ENCODE measurements at regions of chr10 and their contacts with region 1.

Region 1: DNA sequence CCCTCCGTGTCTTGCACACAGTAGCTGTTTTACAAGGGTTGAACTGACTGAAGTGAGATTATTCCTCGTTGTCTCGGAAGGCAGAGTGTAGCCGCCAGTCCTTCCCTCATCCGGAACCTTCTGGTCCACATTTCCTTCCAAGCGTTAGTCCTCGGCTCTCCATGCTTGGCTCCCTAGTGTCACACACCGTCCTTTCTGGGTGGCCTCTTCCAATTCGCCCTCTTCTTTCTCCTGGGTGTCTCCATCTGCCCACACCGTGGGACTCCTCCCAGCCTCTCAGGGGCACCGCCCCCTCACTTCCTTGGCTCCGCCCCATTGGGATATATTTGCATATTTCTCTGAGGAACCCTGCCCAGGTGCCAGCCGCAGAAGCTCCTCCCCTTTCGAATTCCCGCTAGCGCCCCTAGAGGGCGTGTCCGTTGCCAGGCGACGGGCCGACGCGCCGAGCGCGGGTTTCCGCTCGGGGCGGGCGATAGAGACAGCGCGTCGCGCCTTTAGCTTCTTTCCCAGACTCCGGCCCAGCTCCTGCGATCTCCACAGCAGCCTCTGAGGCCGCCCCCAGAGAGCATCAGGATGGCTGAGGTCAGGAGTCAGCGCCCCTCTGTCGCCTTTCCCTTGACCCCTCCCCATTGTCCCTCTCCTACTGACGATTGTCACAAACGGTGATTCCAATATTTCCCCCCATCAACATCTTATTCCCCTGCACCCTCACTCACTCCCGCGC is at the start of gene CFAP58:
- DNase-seq: peak; percentile 82 to 90 (median 87)
- ATAC-seq: peak; percentile 88
- H3K4me3 ChIP-seq: peak within 1 kb of the TSS; percentile 54
- H3K4me3 Mint-ChIP-seq: peak within 1 kb of the TSS in 6 of 10 donors; percentile 4 to 67 (median 10)
- H3K27ac ChIP-seq: no peak within 1 kb of the TSS
- H3K27ac Mint-ChIP-seq: peak within 1 kb of the TSS in 2 of 9 donors; percentile 14 to 61
- H3K4me1 ChIP-seq: peaks cover 11% of the 10 kb centered on the region in 2 donors
- H3K4me1 Mint-ChIP-seq: peaks cover 0 to 20% (median 6%) of the 10 kb centered on the region in 7 donors
- H3K27me3 ChIP-seq: no peaks in the 10 kb centered on the region
- H3K27me3 Mint-ChIP-seq: no peaks in the 10 kb centered on the region
- total RNA-seq, gene CFAP58: 0.17 TPM in 1 of 5 experiments, not detected in the others

Region 2: DNA sequence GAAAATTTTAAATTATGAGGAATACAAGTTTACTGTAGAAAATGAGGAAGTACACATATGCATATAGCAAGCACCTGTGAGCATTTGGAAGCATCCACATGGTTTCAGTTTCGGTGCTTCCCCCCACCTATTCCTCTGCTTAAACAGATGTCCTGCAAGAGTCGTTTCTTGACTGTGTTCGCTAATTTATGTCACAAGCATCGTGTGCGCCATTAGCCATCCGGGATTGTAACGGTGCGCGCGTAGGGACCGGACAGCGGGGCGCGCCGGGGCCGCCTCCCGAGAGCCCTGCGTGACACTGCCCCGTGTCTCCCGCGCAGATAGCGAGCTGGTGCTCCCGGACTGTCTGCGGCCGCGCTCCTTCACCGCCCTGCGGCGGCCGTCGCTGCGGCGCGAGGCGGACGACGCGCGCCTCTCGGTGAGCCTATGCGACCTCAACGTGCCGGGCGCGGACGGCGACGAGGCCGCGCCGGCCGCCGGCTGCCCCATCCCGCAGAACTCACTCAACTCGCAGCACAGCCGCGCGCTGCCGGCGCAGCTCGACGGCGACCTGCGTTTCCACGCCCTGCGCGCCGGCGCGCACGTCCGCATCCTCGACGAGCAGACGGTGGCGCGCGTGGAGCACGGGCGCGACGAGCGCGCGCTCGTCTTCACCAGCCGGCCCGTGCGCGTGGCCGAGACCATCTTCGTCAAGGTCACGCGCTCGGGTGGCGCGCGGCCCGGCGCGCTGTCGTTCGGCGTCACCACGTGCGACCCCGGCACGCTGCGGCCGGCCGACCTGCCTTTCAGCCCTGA is 769.1 kb before region 1 on chr10:
- CTCF ChIA-PET with region 1: no interaction called
- POLR2A ChIA-PET with region 1: no interaction called
- intact Hi-C with region 1: no loop called
- DNase-seq: peak; percentile 46 to 69 (median 58)
- ATAC-seq: peak; percentile 86
- H3K4me3 ChIP-seq: peak overlapping the region; percentile 91
- H3K4me3 Mint-ChIP-seq: peak overlapping the region; percentile 84 to 98 (median 90)
- H3K27ac ChIP-seq: peak overlapping the region; percentile 65
- H3K27ac Mint-ChIP-seq: peak overlapping the region; percentile 84 to 98 (median 96)
- H3K4me1 ChIP-seq: peaks cover 6 to 10% of the 10 kb centered on the region in 2 donors
- H3K4me1 Mint-ChIP-seq: peaks cover 4 to 27% (median 18%) of the 10 kb centered on the region in 7 donors
- H3K27me3 ChIP-seq: no peaks in the 10 kb centered on the region
- H3K27me3 Mint-ChIP-seq: peaks cover 0 to 10% (median 0%) of the 10 kb centered on the region in 5 donors

Region 3: GRCh38 chr10:103918053-103918846 is 435.2 kb before region 1 on chr10 and contains the start of gene STN1:
- CTCF ChIA-PET with region 1: no interaction called
- POLR2A ChIA-PET with region 1: no interaction called
- intact Hi-C with region 1: loop called in 1 of 2 experiments (anchors 5 kb)
- DNase-seq: peak; percentile 81 to 95 (median 94)
- ATAC-seq: peak; percentile 97
- H3K4me3 ChIP-seq: peak within 1 kb of the TSS; percentile 89
- H3K4me3 Mint-ChIP-seq: peak within 1 kb of the TSS; percentile 88 to 99 (median 97)
- H3K27ac ChIP-seq: peak within 1 kb of the TSS; percentile 79
- H3K27ac Mint-ChIP-seq: peak within 1 kb of the TSS; percentile 95 to 99 (median 97)
- H3K4me1 ChIP-seq: peaks cover 28 to 31% of the 10 kb centered on the region in 2 donors
- H3K4me1 Mint-ChIP-seq: peaks cover 15 to 44% (median 38%) of the 10 kb centered on the region in 7 donors
- H3K27me3 ChIP-seq: no peaks in the 10 kb centered on the region
- H3K27me3 Mint-ChIP-seq: no peaks in the 10 kb centered on the region
- total RNA-seq, gene STN1: 28.8 to 42.6 (median 34.8) TPM

Region 4: DNA sequence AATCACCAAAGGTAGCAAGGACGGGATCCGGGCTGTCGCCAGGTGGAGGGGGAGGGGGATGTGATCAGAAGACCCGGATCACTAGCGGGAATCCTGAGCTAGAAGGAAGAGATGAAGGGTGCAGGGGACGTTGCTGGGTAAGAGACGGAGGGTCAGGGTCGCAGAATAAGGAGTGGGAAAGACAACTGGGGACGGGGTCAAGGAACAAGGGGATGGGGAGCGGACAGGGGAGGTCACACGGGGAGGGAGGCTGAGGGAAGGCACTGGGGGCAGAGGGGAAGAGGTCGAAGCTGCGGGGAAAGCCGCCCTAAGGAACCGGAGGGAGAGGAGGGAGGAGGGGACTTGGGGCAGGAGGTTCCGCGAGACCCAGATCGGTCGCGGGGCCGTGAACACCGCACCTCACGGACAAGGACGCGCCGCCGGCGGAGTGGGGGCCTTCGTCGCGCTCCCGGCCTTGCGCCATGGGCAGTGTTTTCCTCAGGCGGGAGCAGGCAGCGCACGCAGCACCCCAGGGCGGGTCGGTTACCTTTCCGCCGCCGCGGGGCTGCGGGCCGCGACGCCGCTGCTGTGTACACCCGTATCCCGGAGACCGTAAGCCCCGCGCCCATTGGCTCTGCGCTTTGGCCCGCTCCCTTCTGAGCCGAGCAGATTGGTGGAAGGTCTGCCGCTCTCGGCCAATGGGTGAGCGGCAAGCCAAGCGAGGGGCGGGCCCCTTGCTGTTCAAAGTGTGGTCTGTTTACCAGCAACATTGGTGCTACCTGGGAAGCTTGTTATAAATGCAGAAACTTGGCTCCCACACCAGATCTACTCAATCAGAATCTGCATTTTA is 121.5 kb before region 1 on chr10 and contains the start of gene CFAP43:
- CTCF ChIA-PET with region 1: no interaction called
- POLR2A ChIA-PET with region 1: no interaction called
- intact Hi-C with region 1: loop called (anchors 1 kb)
- DNase-seq: peak; percentile 99 to 100 (median 99)
- ATAC-seq: peak; percentile 100
- H3K4me3 ChIP-seq: peak within 1 kb of the TSS; percentile 74
- H3K4me3 Mint-ChIP-seq: peak within 1 kb of the TSS; percentile 84 to 95 (median 91)
- H3K27ac ChIP-seq: peak within 1 kb of the TSS; percentile 44
- H3K27ac Mint-ChIP-seq: peak within 1 kb of the TSS; percentile 63 to 95 (median 86)
- H3K4me1 ChIP-seq: peaks cover 0 to 6% of the 10 kb centered on the region in 2 donors
- H3K4me1 Mint-ChIP-seq: peaks cover 6 to 18% (median 13%) of the 10 kb centered on the region in 7 donors
- H3K27me3 ChIP-seq: peaks cover 0 to 7% of the 10 kb centered on the region in 2 donors
- H3K27me3 Mint-ChIP-seq: peaks cover 10 to 58% (median 19%) of the 10 kb centered on the region in 5 donors
- total RNA-seq, gene CFAP43: 0.17 TPM in 1 of 5 experiments, not detected in the others

Region 5: DNA sequence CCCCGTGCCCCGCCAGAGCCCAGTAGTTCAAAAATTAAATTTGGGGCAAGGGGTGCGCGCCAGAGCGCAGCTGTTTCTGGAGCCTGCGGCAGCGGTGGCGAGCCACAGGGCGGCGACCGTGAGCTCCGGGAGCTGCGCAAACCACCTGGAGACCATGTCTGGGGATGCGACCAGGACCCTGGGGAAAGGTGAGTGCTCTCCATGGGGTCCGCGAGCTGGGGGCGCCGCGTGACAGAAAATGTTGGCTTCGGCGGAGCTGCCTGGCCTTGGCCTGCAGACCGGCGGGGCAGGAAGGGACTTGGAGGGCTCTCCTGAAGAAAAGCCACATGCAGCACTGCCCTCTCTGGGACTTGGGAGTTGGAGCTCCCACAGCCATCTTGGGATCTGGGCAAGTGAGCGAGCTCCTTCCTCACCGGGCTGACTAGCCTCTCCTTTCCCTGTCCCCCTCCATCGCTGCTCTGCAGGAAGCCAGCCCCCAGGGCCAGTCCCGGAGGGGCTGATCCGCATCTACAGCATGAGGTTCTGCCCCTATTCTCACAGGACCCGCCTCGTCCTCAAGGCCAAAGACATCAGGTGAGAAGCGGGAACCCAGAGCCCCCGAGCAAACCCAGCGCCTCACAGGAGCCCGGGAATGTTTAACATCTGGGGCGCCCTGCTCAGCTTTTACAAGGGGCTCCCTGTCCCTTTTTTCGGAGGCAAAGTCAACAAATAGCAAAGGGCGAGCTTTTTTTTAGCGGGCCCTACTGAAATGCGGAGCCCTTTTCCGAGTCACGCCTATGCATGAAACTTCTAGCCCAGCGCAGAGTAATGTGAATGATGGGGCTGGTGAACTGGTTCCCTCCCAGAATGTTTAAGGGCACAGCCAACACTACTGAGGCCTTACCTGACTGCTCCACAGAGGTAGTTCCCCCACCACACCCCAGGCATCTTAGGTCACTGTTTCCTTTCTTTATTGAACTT is 78.4 kb before region 1 on chr10:
- CTCF ChIA-PET with region 1: interaction called, 39 read pairs
- POLR2A ChIA-PET with region 1: interaction called, 8 read pairs
- intact Hi-C with region 1: loop called in 1 of 2 experiments (anchors 1 kb)
- DNase-seq: peak in 6 of 9 donors; percentile 35 to 60 (median 44)
- ATAC-seq: peak; percentile 90
- H3K4me3 ChIP-seq: peak overlapping the region; percentile 44
- H3K4me3 Mint-ChIP-seq: peak overlapping the region in 8 of 10 donors; percentile 18 to 70 (median 40)
- H3K27ac ChIP-seq: no peak overlapping the region
- H3K27ac Mint-ChIP-seq: no peak overlapping the region
- H3K4me1 ChIP-seq: peaks cover 3 to 7% of the 10 kb centered on the region in 2 donors
- H3K4me1 Mint-ChIP-seq: peaks cover 0 to 5% (median 0%) of the 10 kb centered on the region in 7 donors
- H3K27me3 ChIP-seq: no peaks in the 10 kb centered on the region
- H3K27me3 Mint-ChIP-seq: peaks cover 0 to 22% (median 4%) of the 10 kb centered on the region in 5 donors

Region 6: DNA sequence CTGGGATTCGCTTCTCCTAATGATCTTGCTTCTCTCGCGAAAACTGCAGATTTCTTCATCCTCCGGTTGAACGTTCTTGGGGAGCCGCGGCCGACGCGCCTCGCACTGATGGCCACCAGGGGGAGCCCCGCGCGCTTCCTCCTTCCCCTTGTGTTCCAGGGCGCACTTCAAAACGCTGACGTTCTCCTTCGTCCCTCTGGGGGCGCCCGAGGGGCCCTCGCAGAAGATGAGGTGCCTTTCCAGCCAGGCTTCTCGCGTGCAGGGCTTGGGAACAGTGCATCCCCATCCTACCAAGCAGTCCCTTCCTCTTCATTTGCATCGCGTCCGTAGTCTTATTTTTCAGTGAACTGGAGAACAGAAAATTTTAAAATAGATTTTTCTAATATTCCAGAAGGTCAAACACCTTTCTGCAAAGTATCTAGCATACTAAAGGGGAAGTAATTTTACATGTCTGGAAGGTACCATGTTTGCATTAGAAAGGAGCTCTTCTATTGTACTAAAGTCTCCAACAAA is 62.0 kb before region 1 on chr10:
- CTCF ChIA-PET with region 1: interaction called, 220 read pairs
- POLR2A ChIA-PET with region 1: interaction called, 3 read pairs
- intact Hi-C with region 1: loop called (anchors 1 kb)
- DNase-seq: peak; percentile 77 to 89 (median 86)
- ATAC-seq: peak; percentile 100
- H3K4me3 ChIP-seq: no peak overlapping the region
- H3K4me3 Mint-ChIP-seq: peak overlapping the region in 4 of 10 donors; percentile 0 to 64 (median 26)
- H3K27ac ChIP-seq: no peak overlapping the region
- H3K27ac Mint-ChIP-seq: peak overlapping the region in 5 of 9 donors; percentile 1 to 81 (median 20)
- H3K4me1 ChIP-seq: peaks cover 0 to 9% of the 10 kb centered on the region in 2 donors
- H3K4me1 Mint-ChIP-seq: peaks cover 2 to 11% (median 6%) of the 10 kb centered on the region in 7 donors
- H3K27me3 ChIP-seq: peaks cover 0 to 5% of the 10 kb centered on the region in 2 donors
- H3K27me3 Mint-ChIP-seq: peaks cover 3 to 45% (median 10%) of the 10 kb centered on the region in 5 donors

Region 7: DNA sequence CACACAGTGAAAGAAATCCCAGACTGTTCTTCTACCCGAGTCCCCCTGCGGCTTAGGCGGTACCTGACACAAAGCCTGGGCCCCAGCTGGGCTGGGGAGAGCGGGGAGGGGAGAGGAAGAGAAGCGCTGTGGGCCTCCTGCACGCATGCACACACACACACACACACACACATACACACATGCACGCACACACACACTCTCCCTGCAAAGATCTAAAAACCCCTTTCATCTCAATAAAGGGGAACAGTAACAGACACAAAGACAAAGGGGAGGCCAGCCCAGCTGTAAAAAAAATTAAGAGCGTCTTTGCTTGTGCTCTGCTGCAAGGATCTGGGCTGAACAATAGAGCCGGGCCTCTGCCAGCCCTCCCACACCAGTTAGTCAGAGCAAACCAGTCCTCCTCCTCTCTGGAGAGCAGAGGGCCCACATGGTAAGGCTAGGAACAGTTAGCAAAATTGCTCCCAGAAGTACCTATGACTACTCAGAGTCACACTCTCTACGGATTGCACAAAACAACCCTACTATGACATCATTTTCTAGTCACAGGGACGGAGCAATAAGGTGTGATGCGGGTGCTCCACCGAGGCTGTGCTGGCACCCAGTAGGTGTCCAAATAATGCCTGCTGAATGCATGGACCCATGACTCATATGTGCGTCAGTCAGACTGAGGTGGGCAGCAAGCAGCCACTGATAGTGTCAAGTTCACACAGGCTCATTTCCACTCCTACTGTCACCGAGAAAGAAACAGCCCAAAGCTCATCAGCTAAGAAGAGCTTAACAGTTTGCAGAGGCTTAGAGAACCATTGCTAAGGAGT is 24.4 kb before region 1 on chr10:
- CTCF ChIA-PET with region 1: interaction called, 10 read pairs
- POLR2A ChIA-PET with region 1: interaction called, 3 read pairs
- intact Hi-C with region 1: loop called (anchors 1 kb)
- DNase-seq: peak in 8 of 9 donors; percentile 71 to 95 (median 80)
- ATAC-seq: peak; percentile 64
- H3K4me3 ChIP-seq: peak overlapping the region; percentile 51
- H3K4me3 Mint-ChIP-seq: peak overlapping the region; percentile 76 to 93 (median 86)
- H3K27ac ChIP-seq: peak overlapping the region; percentile 78
- H3K27ac Mint-ChIP-seq: peak overlapping the region; percentile 87 to 97 (median 94)
- H3K4me1 ChIP-seq: peaks cover 64 to 97% of the 10 kb centered on the region in 2 donors
- H3K4me1 Mint-ChIP-seq: peaks cover 80 to 100% (median 99%) of the 10 kb centered on the region in 7 donors
- H3K27me3 ChIP-seq: no peaks in the 10 kb centered on the region
- H3K27me3 Mint-ChIP-seq: no peaks in the 10 kb centered on the region

Region 8: GRCh38 chr10:104337974-104338735 is 15.3 kb before region 1 on chr10 and contains the start of gene ITPRIP:
- CTCF ChIA-PET with region 1: interaction called, 24 read pairs
- POLR2A ChIA-PET with region 1: interaction called, 19 read pairs
- intact Hi-C with region 1: loop called (anchors 1 kb)
- DNase-seq: peak; percentile 60 to 89 (median 88)
- ATAC-seq: peak; percentile 86
- H3K4me3 ChIP-seq: peak within 1 kb of the TSS; percentile 85
- H3K4me3 Mint-ChIP-seq: peak within 1 kb of the TSS; percentile 88 to 100 (median 98)
- H3K27ac ChIP-seq: peak within 1 kb of the TSS; percentile 94
- H3K27ac Mint-ChIP-seq: peak within 1 kb of the TSS; percentile 87 to 100 (median 99)
- H3K4me1 ChIP-seq: peaks cover 22 to 34% of the 10 kb centered on the region in 2 donors
- H3K4me1 Mint-ChIP-seq: peaks cover 34 to 58% (median 49%) of the 10 kb centered on the region in 7 donors
- H3K27me3 ChIP-seq: no peaks in the 10 kb centered on the region
- H3K27me3 Mint-ChIP-seq: peaks cover 0 to 10% (median 0%) of the 10 kb centered on the region in 5 donors
- total RNA-seq, gene ITPRIP: 20.0 to 129 (median 27.8) TPM

Region 9: GRCh38 chr10:104688251-104688650 is 334.8 kb after region 1 on chr10:
- CTCF ChIA-PET with region 1: no interaction called
- POLR2A ChIA-PET with region 1: no interaction called
- intact Hi-C with region 1: no loop called
- DNase-seq: no peak
- ATAC-seq: no peak
- H3K4me3 ChIP-seq: no peak overlapping the region
- H3K4me3 Mint-ChIP-seq: no peak overlapping the region
- H3K27ac ChIP-seq: no peak overlapping the region
- H3K27ac Mint-ChIP-seq: no peak overlapping the region
- H3K4me1 ChIP-seq: no peaks in the 10 kb centered on the region
- H3K4me1 Mint-ChIP-seq: no peaks in the 10 kb centered on the region
- H3K27me3 ChIP-seq: no peaks in the 10 kb centered on the region
- H3K27me3 Mint-ChIP-seq: peaks cover 4 to 64% (median 44%) of the 10 kb centered on the region in 5 donors